OCI-LY7 (cell line): ENCODE measurements at regions of chr3 and their contacts with region 1.

Region 1: GRCh38 chr3:41219424-41219823 is 20.1 kb downstream of the CTNNB1 start:
- DNase-seq: no peak
- H3K4me3 ChIP-seq: no peak overlapping the region
- H3K27ac ChIP-seq: no peak overlapping the region
- H3K4me1 ChIP-seq: no peaks in the 10 kb centered on the region
- CTCF ChIP-seq: no peak

Region 2: GRCh38 chr3:41208507-41209220 is 10.8 kb before region 1 on chr3:
- CTCF ChIA-PET with region 1: interaction called, 3 read pairs
- POLR2A ChIA-PET with region 1: interaction called, 10 read pairs
- intact Hi-C with region 1: no loop called
- DNase-seq: no peak
- H3K4me3 ChIP-seq: no peak overlapping the region
- H3K27ac ChIP-seq: no peak overlapping the region
- H3K4me1 ChIP-seq: peaks cover 12% of the 10 kb centered on the region
- CTCF ChIP-seq: no peak